Naive thymus-derived CD8-positive, alpha-beta T cell (primary cell): ENCODE measurements at regions of chr1 and their contacts with region 1.

Region 1: GRCh38 chr1:228082135-228082891 is at the start of gene ARF1:
- DNase-seq: peak; percentile 87 to 98 (median 94)
- ATAC-seq: peak; percentile 84 to 89
- H3K4me3 Mint-ChIP-seq: peak within 1 kb of the TSS; percentile 88 to 96 (median 94)
- H3K27ac Mint-ChIP-seq: peak within 1 kb of the TSS; percentile 81 to 99 (median 98)
- H3K4me1 Mint-ChIP-seq: peaks cover 31 to 64% (median 57%) of the 10 kb centered on the region in 4 donors
- H3K27me3 Mint-ChIP-seq: no peaks in the 10 kb centered on the region
- polyA plus RNA-seq, gene ARF1: 332 to 385 (median 368) TPM

Region 2: DNA sequence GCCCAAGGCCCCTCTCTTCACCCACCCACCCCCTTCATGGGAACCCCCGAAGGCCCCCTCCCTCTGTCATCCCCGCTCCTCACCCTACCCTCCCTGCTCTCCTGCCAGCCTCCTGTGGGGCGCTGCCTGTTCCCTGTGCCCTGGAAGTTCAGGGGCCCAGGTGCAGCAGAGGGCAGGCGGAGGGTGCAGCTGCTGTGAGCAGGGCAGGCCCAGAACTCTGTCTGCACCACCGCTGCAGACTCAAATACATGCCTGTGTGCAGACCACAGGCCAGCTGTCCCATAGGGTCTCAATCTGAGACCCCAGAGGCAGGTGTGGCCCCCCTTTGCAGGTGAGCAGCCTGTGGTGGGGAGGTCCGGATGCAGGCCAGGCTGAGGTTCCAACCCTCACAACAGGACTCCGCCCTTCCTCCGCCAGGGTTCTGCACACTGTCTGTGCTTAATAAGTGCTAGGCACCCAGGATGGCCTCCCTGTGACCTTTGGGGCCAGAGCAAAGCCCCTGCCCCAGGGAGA is 197.1 kb before region 1 on chr1:
- POLR2A ChIA-PET with region 1: no interaction called
- DNase-seq: peak in 6 of 10 donors; percentile 35 to 68 (median 50)
- ATAC-seq: peak; percentile 63 to 76
- H3K4me3 Mint-ChIP-seq: peak overlapping the region; percentile 62 to 85 (median 78)
- H3K27ac Mint-ChIP-seq: peak overlapping the region; percentile 86 to 95 (median 92)
- H3K4me1 Mint-ChIP-seq: peaks cover 17 to 56% (median 37%) of the 10 kb centered on the region in 4 donors
- H3K27me3 Mint-ChIP-seq: no peaks in the 10 kb centered on the region

Region 3: GRCh38 chr1:228059634-228060457 is 22.5 kb before region 1 on chr1:
- POLR2A ChIA-PET with region 1: interaction called, 10 read pairs
- DNase-seq: peak; percentile 27 to 79 (median 60)
- ATAC-seq: peak; percentile 36 to 53
- H3K4me3 Mint-ChIP-seq: peak overlapping the region; percentile 49 to 72 (median 66)
- H3K27ac Mint-ChIP-seq: peak overlapping the region in 5 of 10 donors; percentile 29 to 82 (median 67)
- H3K4me1 Mint-ChIP-seq: peaks cover 6 to 16% (median 12%) of the 10 kb centered on the region in 4 donors
- H3K27me3 Mint-ChIP-seq: peaks cover 10 to 52% (median 30%) of the 10 kb centered on the region in 5 donors

Region 4: GRCh38 chr1:228071839-228072657 is 10.3 kb before region 1 on chr1:
- POLR2A ChIA-PET with region 1: no interaction called
- DNase-seq: peak in 1 of 10 donors; percentile 14
- ATAC-seq: peak in 1 of 2 donors; percentile 38
- H3K4me3 Mint-ChIP-seq: no peak overlapping the region
- H3K27ac Mint-ChIP-seq: no peak overlapping the region
- H3K4me1 Mint-ChIP-seq: peaks cover 0 to 20% (median 13%) of the 10 kb centered on the region in 4 donors
- H3K27me3 Mint-ChIP-seq: peaks cover 0 to 4% (median 0%) of the 10 kb centered on the region in 5 donors

Region 5: DNA sequence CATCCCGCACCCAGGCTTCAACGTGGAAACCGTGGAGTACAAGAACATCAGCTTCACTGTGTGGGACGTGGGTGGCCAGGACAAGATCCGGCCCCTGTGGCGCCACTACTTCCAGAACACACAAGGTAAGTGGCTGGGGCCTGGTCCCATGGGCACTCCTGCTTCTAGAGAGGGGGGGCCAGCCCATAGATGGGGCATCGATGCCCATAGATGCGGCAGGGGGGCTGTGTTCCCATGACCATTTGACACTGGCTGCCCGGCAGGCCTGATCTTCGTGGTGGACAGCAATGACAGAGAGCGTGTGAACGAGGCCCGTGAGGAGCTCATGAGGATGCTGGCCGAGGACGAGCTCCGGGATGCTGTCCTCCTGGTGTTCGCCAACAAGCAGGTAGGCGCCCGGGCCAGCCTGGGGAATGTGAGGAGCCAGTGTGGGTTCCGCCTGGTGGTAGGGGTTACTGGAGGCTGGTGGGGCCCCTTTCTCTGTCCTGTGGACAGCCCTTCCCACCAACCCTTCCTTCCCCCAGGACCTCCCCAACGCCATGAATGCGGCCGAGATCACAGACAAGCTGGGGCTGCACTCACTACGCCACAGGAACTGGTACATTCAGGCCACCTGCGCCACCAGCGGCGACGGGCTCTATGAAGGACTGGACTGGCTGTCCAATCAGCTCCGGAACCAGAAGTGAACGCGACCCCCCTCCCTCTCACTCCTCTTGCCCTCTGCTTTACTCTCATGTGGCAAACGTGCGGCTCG is 15.2 kb after region 1 on chr1:
- POLR2A ChIA-PET with region 1: interaction called, 14 read pairs
- DNase-seq: no peak
- ATAC-seq: no peak
- H3K4me3 Mint-ChIP-seq: peak overlapping the region in 2 of 10 donors; percentile 45 to 60
- H3K27ac Mint-ChIP-seq: peak overlapping the region in 4 of 10 donors; percentile 10 to 68 (median 58)
- H3K4me1 Mint-ChIP-seq: peaks cover 17 to 44% (median 41%) of the 10 kb centered on the region in 4 donors
- H3K27me3 Mint-ChIP-seq: no peaks in the 10 kb centered on the region

Region 6: GRCh38 chr1:228109073-228109961 is 27.0 kb after region 1 on chr1 and contains the start of gene MRPL55:
- POLR2A ChIA-PET with region 1: interaction called, 30 read pairs
- DNase-seq: peak; percentile 96 to 100 (median 98)
- ATAC-seq: peak; percentile 90
- H3K4me3 Mint-ChIP-seq: peak within 1 kb of the TSS; percentile 88 to 98 (median 94)
- H3K27ac Mint-ChIP-seq: peak within 1 kb of the TSS; percentile 93 to 99 (median 97)
- H3K4me1 Mint-ChIP-seq: peaks cover 9 to 33% (median 31%) of the 10 kb centered on the region in 4 donors
- H3K27me3 Mint-ChIP-seq: no peaks in the 10 kb centered on the region
- polyA plus RNA-seq, gene MRPL55: 96.9 to 130 (median 103) TPM

Region 7: DNA sequence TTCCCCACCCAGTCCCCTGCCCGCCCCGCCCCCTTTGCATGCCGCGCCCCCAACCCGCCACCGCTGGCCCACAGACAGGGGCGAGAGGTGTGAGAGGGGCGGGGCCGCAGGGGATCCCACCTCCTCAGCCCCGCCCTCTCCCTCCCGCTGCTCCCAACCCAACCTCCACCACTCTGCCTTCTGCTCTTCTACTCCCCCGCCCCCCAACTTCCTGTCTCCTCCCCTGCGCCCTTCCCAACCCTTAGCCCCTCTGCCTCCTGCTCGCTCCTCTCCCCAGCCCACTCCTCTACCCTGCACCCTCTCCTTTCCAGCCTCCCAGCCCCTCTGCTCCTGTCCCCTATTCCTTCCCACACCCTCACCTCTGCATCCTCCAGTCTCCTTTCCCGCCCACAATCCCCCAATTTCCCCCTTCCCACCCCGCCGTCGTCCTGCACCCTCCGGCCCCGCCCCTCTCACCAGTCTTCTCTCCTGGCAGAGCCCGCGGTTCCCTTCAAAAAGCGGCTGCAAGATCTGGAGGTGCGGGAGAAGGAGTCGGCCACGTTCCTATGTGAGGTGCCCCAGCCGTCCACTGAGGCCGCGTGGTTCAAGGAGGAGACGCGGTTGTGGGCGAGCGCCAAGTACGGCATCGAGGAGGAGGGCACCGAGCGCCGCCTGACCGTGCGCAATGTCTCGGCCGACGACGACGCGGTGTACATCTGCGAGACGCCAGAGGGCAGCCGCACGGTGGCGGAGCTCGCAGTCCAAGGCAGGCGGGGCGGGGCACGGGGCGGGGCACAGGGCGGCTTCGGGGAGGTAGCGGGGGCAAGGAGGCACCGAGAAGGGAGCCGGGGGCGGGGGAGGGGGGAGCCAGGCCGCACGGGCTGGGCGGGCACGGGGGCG is 130.9 kb after region 1 on chr1:
- POLR2A ChIA-PET with region 1: no interaction called
- DNase-seq: peak; percentile 78 to 95 (median 86)
- ATAC-seq: peak; percentile 90 to 95
- H3K4me3 Mint-ChIP-seq: peak overlapping the region; percentile 86 to 94 (median 92)
- H3K27ac Mint-ChIP-seq: peak overlapping the region; percentile 44 to 97 (median 92)
- H3K4me1 Mint-ChIP-seq: peaks cover 3 to 18% (median 9%) of the 10 kb centered on the region in 4 donors
- H3K27me3 Mint-ChIP-seq: no peaks in the 10 kb centered on the region